Mammary epithelial cell (primary cell): ENCODE measurements at regions of chr1 and their contacts with region 1.

Region 1: GRCh38 chr1:59759156-59759925 is 55.4 kb upstream of the HOOK1 start:
- DNase-seq: peak; percentile 73
- H3K4me3 ChIP-seq: no peak overlapping the region
- H3K27ac ChIP-seq: no peak overlapping the region
- H3K4me1 ChIP-seq: peaks cover 22% of the 10 kb centered on the region
- H3K27me3 ChIP-seq: no peaks in the 10 kb centered on the region
- CTCF ChIP-seq: peak; percentile 96

Region 2: DNA sequence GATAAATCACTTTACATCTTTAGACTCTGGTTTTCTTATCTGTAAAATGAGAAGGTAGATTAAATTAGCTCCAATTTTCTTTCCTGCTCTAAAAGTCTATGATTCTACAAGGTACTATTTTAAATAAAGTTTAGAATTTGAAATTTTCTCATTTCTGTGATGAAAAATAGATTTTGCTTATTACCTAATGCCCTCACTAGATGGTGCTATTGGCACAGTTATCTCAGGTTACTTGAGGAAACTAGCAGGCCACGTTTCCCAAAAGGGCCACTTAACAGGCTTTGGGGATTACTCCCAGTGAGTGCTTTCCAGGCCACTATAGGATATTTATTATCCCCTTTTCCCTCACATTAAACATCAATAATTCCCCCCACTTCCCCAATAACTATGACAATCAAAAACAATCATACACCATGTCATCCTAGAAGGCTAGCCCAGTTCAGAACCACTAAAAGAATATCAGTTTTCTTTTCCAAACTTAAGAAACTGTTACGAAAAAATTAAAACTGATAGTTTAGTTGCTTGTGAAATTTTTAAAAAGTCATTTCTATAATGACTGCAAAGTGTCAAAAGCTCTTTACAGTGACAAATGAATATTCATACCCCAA is 1243.4 kb before region 1 on chr1:
- CTCF ChIA-PET with region 1: no interaction called
- dilution Hi-C with region 1: no loop called
- in situ Hi-C with region 1: loop called in 1 of 2 experiments (anchors 25 kb)
- intact Hi-C with region 1: loop called (anchors 5 kb)
- DNase-seq: peak; percentile 51
- H3K4me3 ChIP-seq: no peak overlapping the region
- H3K27ac ChIP-seq: no peak overlapping the region
- H3K4me1 ChIP-seq: no peaks in the 10 kb centered on the region
- H3K27me3 ChIP-seq: no peaks in the 10 kb centered on the region
- CTCF ChIP-seq: peak; percentile 46 to 60

Region 3: GRCh38 chr1:58739856-58740466 is 1019.4 kb before region 1 on chr1:
- CTCF ChIA-PET with region 1: no interaction called
- dilution Hi-C with region 1: no loop called
- in situ Hi-C with region 1: loop called in 1 of 2 experiments (anchors 25 kb)
- intact Hi-C with region 1: loop called (anchors 1 kb)
- DNase-seq: peak; percentile 41
- H3K4me3 ChIP-seq: no peak overlapping the region
- H3K27ac ChIP-seq: no peak overlapping the region
- H3K4me1 ChIP-seq: peaks cover 13% of the 10 kb centered on the region
- H3K27me3 ChIP-seq: no peaks in the 10 kb centered on the region
- CTCF ChIP-seq: peak; percentile 70 to 75

Region 4: GRCh38 chr1:59143133-59143487 is 616.2 kb before region 1 on chr1:
- CTCF ChIA-PET with region 1: no interaction called
- dilution Hi-C with region 1: no loop called
- in situ Hi-C with region 1: no loop called
- intact Hi-C with region 1: loop called (anchors 5 kb)
- DNase-seq: peak; percentile 95
- H3K4me3 ChIP-seq: no peak overlapping the region
- H3K27ac ChIP-seq: peak overlapping the region; percentile 60
- H3K4me1 ChIP-seq: peaks cover 56% of the 10 kb centered on the region
- H3K27me3 ChIP-seq: no peaks in the 10 kb centered on the region
- CTCF ChIP-seq: no peak

Region 5: DNA sequence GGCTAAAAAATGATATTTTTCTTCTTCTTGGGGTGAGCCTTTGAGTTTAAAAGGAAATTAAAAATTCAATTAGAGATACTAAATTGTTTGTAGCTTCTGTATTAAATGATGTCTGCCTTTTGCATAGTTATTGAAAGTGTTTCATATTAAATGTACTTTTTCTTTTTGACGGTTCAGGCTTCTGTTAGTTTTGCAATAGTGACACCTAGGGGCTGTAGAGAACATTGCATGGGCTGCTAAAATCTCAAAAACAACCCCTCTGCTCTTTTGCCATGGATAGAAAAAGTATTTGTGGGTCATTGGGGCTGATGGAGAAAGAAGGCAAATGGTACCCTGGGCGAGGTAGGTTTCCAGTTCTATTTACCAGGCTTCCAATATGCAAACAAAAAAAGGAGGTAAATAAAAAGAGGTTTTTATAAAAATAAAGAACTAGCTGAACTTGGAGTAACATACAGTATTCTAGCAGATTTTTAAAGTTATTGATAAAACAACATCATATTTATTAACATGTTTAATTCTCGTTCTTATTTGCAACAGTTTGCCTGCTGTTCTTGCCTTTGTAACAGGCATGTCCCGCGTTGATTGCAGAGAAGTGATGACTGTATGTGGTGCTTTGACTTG is 60.0 kb before region 1 on chr1:
- CTCF ChIA-PET with region 1: no interaction called
- dilution Hi-C with region 1: no loop called
- in situ Hi-C with region 1: no loop called
- intact Hi-C with region 1: loop called (anchors 1 kb)
- DNase-seq: no peak
- H3K4me3 ChIP-seq: no peak overlapping the region
- H3K27ac ChIP-seq: no peak overlapping the region
- H3K4me1 ChIP-seq: no peaks in the 10 kb centered on the region
- H3K27me3 ChIP-seq: no peaks in the 10 kb centered on the region
- CTCF ChIP-seq: peak; percentile 92 to 94

Region 6: GRCh38 chr1:59730759-59731478 is 28.4 kb before region 1 on chr1:
- CTCF ChIA-PET with region 1: interaction called, 5 read pairs
- dilution Hi-C with region 1: no loop called
- in situ Hi-C with region 1: no loop called
- intact Hi-C with region 1: loop called (anchors 2 kb)
- DNase-seq: peak; percentile 92
- H3K4me3 ChIP-seq: no peak overlapping the region
- H3K27ac ChIP-seq: peak overlapping the region; percentile 64
- H3K4me1 ChIP-seq: peaks cover 30% of the 10 kb centered on the region
- H3K27me3 ChIP-seq: no peaks in the 10 kb centered on the region
- CTCF ChIP-seq: no peak